H1 (cell line): ENCODE measurements at regions of chr4 and their contacts with region 1.

Region 1: GRCh38 chr4:175054980-175055379 is 136.8 kb downstream of the ADAM29 start:
- DNase-seq: peak; percentile 50 to 63
- H3K4me3 ChIP-seq: no peak overlapping the region
- H3K27ac ChIP-seq: no peak overlapping the region
- H3K4me1 ChIP-seq: no peaks in the 10 kb centered on the region
- H3K27me3 ChIP-seq: no peaks in the 10 kb centered on the region
- CTCF ChIP-seq: peak; percentile 60 to 75 (median 66)
- EP300 ChIP-seq: no peak
- POLR2A ChIP-seq: no peak
- RAD21 ChIP-seq: peak; percentile 61 to 72

Region 2: GRCh38 chr4:174873931-174874330 is 181.0 kb before region 1 on chr4:
- CTCF ChIA-PET with region 1: interaction called, 10 read pairs
- POLR2A ChIA-PET with region 1: no interaction called
- DNase-seq: no peak
- H3K4me3 ChIP-seq: no peak overlapping the region
- H3K27ac ChIP-seq: no peak overlapping the region
- H3K4me1 ChIP-seq: no peaks in the 10 kb centered on the region
- H3K27me3 ChIP-seq: no peaks in the 10 kb centered on the region
- CTCF ChIP-seq: peak in 2 of 3 experiments; percentile 45 to 51; a peak in 3 of 4 replicates
- EP300 ChIP-seq: no peak
- POLR2A ChIP-seq: no peak
- RAD21 ChIP-seq: peak; percentile 74 to 76

Region 3: GRCh38 chr4:175071123-175071522 is 16.1 kb after region 1 on chr4:
- CTCF ChIA-PET with region 1: no interaction called
- POLR2A ChIA-PET with region 1: no interaction called
- DNase-seq: no peak
- H3K4me3 ChIP-seq: no peak overlapping the region
- H3K27ac ChIP-seq: no peak overlapping the region
- H3K4me1 ChIP-seq: peaks cover 0 to 5% (median 0%) of the 10 kb centered on the region in 4 experiments; a peak in 2 of 7 replicates
- H3K27me3 ChIP-seq: no peaks in the 10 kb centered on the region
- CTCF ChIP-seq: no peak
- EP300 ChIP-seq: no peak
- POLR2A ChIP-seq: no peak
- RAD21 ChIP-seq: no peak

Region 4: DNA sequence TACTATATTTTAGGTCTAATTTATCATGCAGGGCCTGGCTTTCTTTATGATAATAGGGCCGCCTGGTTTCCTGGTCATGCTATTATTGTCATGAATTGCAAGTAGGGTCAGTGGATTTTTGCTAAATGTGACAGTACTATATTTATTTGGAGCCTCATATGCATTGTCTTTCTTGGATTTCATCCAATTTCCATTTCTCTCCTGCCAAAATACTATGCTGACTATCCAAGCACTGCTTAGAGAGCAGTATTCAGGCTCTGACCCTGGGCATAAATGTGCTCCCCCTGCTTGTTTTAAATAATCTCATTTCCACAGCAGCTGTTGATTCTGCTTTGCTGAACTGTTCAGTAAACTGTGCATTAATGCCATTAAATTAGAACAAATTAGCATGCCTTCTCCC is 487.8 kb after region 1 on chr4:
- CTCF ChIA-PET with region 1: no interaction called
- POLR2A ChIA-PET with region 1: no interaction called
- DNase-seq: no peak
- H3K4me3 ChIP-seq: no peak overlapping the region
- H3K27ac ChIP-seq: no peak overlapping the region
- H3K4me1 ChIP-seq: no peaks in the 10 kb centered on the region
- H3K27me3 ChIP-seq: no peaks in the 10 kb centered on the region
- CTCF ChIP-seq: no peak
- EP300 ChIP-seq: no peak
- POLR2A ChIP-seq: no peak
- RAD21 ChIP-seq: no peak